ENCODE measurements at regions of chr13 and their contacts with region 1.

Region 1: DNA sequence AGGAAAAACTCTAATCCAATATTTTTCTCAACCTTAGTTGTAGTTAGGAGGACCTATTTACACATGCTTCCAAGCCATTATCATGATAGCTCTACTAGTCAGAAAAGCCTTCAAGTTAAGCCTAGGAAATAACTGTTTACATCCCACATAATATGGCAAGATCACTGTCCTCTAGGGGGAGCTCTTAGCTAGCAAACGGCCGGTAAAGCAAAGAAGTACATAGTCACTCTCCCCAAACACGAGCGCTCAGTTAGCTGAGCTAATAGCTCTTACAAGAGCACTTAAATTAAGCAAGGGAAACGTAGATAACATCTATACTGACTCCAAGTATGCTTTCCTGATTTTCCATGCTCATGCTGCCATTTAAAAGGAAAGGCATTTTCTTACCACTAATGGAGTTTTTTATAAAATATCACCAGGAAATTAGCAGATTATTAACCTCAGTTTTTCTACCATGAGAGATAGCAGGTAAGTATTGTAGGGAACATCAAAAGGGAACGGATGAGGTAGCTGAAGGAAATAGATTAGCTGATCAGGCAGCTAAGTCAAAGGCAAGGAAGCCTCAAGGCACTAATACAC is 100.6 kb upstream of the PABPC3 start:
- DNase-seq: peak in 1 of 2 donors; percentile 79
- H3K4me3 ChIP-seq: no peak overlapping the region
- H3K27ac ChIP-seq: no peak overlapping the region
- H3K4me1 ChIP-seq: no peaks in the 10 kb centered on the region
- H3K27me3 ChIP-seq: no peaks in the 10 kb centered on the region
- CTCF ChIP-seq: peak; percentile 26 to 72 (median 69)

Region 2: GRCh38 chr13:25037057-25037813 is 41.9 kb after region 1 on chr13:
- intact Hi-C with region 1: loop called (anchors 2 kb)
- DNase-seq: no peak
- H3K4me3 ChIP-seq: no peak overlapping the region
- H3K27ac ChIP-seq: no peak overlapping the region
- H3K4me1 ChIP-seq: no peaks in the 10 kb centered on the region
- H3K27me3 ChIP-seq: no peaks in the 10 kb centered on the region
- CTCF ChIP-seq: peak in 2 of 3 experiments; percentile 62 to 72

Region 3: GRCh38 chr13:25114220-25114619 is 118.9 kb after region 1 on chr13:
- intact Hi-C with region 1: loop called (anchors 10 kb)
- DNase-seq: peak in 1 of 2 donors; percentile 65
- H3K4me3 ChIP-seq: no peak overlapping the region
- H3K27ac ChIP-seq: no peak overlapping the region
- H3K4me1 ChIP-seq: no peaks in the 10 kb centered on the region
- H3K27me3 ChIP-seq: no peaks in the 10 kb centered on the region
- CTCF ChIP-seq: peak; percentile 15 to 65 (median 60)

Region 4: GRCh38 chr13:25286969-25287961 is 291.9 kb after region 1 on chr13 and contains the start of gene MTMR6:
- intact Hi-C with region 1: loop called (anchors 10 kb)
- DNase-seq: peak; percentile 60 to 96
- H3K4me3 ChIP-seq: peak within 1 kb of the TSS; percentile 72 to 89
- H3K27ac ChIP-seq: peak within 1 kb of the TSS; percentile 84 to 94
- H3K4me1 ChIP-seq: peaks cover 3 to 22% of the 10 kb centered on the region in 2 donors
- H3K27me3 ChIP-seq: no peaks in the 10 kb centered on the region
- CTCF ChIP-seq: peak; percentile 98 to 100 (median 100)
- total RNA-seq, gene MTMR6: 6.4 TPM

Region 5: DNA sequence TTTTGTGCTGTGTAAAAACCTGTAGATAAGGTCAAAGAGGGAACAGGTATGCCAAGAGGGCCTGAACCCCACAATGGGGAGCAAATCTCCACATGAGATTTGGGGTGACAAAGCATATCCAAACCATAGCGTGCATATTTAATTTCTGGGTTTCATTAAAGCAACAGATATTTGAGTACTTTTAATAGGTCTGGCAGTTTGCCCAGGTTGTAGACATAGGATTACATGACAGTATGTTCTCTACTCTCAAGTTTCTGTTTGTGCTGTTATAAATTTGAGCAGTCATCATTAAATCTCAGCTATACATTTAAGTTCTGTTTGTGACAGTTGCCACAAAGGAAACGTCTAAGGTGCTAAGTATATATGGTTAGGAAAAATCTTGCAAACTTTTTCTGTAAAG is 612.9 kb after region 1 on chr13:
- intact Hi-C with region 1: no loop called
- DNase-seq: no peak
- H3K4me3 ChIP-seq: no peak overlapping the region
- H3K27ac ChIP-seq: no peak overlapping the region
- H3K4me1 ChIP-seq: no peaks in the 10 kb centered on the region
- H3K27me3 ChIP-seq: no peaks in the 10 kb centered on the region
- CTCF ChIP-seq: no peak

Measured in ascending aorta (tissue), 2 donors.